Heart left ventricle (tissue), 16 donors: ENCODE measurements at regions of chr7 and their contacts with region 1.

Region 1: DNA sequence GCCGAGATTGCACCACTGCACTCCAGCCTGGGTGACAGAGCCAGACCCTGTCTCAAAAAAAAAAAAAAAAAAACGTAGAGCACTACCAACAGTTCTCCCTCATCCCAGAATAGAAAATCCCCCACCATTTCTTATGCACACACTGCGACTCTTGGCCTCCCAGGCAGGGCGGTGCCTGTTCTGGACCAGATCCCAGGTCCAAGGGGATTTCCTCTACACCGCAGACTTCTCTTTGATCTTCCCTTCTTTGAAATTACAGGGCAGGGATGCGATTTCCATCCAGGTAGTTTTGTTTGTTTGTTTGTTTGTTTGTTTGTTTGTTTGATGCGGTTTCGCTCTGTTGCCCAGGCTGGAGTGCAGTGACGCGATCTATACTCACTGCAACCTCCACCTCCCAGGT is 91.8 kb downstream of the SEPTIN14 start:
- DNase-seq: no peak
- ATAC-seq: no peak
- H3K4me3 ChIP-seq: no peak overlapping the region
- H3K27ac ChIP-seq: no peak overlapping the region
- H3K4me1 ChIP-seq: no peaks in the 10 kb centered on the region
- H3K27me3 ChIP-seq: no peaks in the 10 kb centered on the region
- CTCF ChIP-seq: no peak
- POLR2A ChIP-seq: no peak

Region 2: GRCh38 chr7:56026538-56026937 is 255.8 kb after region 1 on chr7:
- intact Hi-C with region 1: loop called in 1 of 10 experiments (anchors 2 kb)
- DNase-seq: no peak
- ATAC-seq: no peak
- H3K4me3 ChIP-seq: no peak overlapping the region
- H3K27ac ChIP-seq: no peak overlapping the region
- H3K4me1 ChIP-seq: peaks cover 0 to 5% (median 0%) of the 10 kb centered on the region in 12 donors
- H3K27me3 ChIP-seq: no peaks in the 10 kb centered on the region
- CTCF ChIP-seq: no peak
- POLR2A ChIP-seq: no peak

Region 3: GRCh38 chr7:57646901-57647246 is 1876.1 kb after region 1 on chr7:
- intact Hi-C with region 1: no loop called
- DNase-seq: no peak
- ATAC-seq: no peak
- H3K4me3 ChIP-seq: no peak overlapping the region
- H3K27ac ChIP-seq: no peak overlapping the region
- H3K4me1 ChIP-seq: no peaks in the 10 kb centered on the region
- H3K27me3 ChIP-seq: no peaks in the 10 kb centered on the region
- CTCF ChIP-seq: no peak
- POLR2A ChIP-seq: no peak